ENCODE measurements at regions of chr17 and their contacts with region 1.

Region 1: GRCh38 chr17:48153691-48154358 is 46.3 kb downstream of the SNX11 start:
- DNase-seq: peak in 4 of 7 donors; percentile 31 to 47 (median 41)
- H3K4me3 ChIP-seq: no peak overlapping the region
- H3K27ac ChIP-seq: no peak overlapping the region
- H3K4me1 ChIP-seq: no peaks in the 10 kb centered on the region
- H3K27me3 ChIP-seq: no peaks in the 10 kb centered on the region
- CTCF ChIP-seq: peak in 5 of 6 experiments; percentile 27 to 67 (median 52)
- POLR2A ChIP-seq: no peak

Region 2: DNA sequence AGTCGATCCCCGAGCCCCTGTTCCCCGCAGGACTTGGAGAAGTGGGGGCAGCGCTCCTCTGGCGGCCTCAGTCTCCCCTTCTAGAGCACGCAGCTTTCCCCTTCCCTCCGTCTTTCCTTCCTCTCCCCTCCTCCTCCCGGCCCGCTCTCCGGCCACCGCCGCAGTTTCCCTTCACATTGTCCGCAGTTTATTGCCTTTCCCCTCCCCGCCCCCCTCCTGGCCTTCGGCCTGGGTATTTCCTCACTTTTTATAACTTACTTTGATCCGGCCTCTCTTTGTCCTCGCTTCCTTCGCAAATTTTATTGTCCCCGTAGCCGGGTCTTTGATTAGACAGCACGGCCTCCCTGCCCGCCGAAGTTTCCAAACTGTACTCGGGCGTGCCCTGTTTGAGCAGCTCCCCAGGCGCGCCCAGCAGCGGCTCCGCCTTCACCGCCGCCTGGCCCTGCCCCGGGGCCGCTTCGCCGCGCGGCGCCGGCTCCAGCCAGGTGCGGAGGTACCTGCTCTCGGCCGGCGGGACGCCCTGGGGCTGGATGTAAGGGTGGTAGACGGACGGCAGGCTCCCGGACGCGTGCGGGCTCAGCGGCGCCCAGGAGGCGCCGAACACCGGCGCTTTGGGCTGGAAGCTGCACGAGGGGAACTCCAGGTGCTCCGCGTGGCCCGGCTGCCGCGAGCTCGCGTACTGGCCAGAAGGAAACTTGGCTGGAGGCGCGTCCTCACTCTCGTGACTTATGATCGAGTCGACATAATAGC is 471.8 kb after region 1 on chr17:
- intact Hi-C with region 1: loop called in 1 of 2 experiments (anchors 10 kb)
- DNase-seq: peak in 3 of 7 donors; percentile 34 to 45 (median 41)
- H3K4me3 ChIP-seq: peak overlapping the region in 2 of 4 donors; percentile 15 to 47
- H3K27ac ChIP-seq: peak overlapping the region in 1 of 5 donors; percentile 3
- H3K4me1 ChIP-seq: peaks cover 19 to 22% of the 10 kb centered on the region in 2 donors
- H3K27me3 ChIP-seq: peaks cover 82% of the 10 kb centered on the region
- CTCF ChIP-seq: no peak
- POLR2A ChIP-seq: no peak

Measured in adrenal gland (tissue), 19 donors.